Head of caudate nucleus (tissue), 42 donors: ENCODE measurements at regions of chr16 and their contacts with region 1.

Region 1: GRCh38 chr16:58025351-58026138 is at the start of gene MMP15:
- DNase-seq: peak in 40 of 42 donors; percentile 31 to 80 (median 63)

Region 2: DNA sequence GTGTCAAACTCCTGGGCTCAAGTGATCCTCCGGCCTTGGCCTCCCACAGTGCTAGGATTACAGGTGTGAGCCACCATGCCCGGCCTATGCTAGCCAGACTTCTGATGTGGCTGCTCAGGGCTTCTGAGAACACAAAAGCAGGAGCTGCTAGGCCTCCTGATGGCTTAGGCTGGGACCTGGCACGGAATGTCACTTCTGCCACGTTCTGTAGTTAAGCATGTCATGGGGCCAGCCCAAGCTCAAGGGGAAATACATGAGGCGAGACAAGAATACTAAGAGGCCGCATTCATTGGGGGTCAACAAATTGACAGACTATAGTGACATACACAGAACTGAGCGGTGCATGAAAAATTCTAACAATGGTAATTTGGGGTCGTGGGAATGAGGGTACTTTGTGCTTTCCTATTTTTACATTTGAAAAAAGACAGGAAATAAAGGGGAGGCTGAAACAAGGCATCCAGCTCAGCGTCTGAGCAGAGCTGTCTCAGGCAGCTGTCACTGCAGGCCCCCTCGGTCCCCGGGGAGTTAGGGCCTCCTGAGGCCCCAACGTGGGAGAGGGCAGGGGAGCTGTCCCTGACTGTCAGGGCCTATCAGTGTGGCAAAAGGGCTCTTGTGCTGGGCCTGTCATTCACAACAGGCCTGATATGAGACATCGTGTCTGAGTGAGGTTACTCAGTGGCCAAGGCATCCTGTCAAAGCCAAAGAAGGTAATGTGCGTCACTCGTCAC is 77.3 kb after region 1 on chr16:
- intact Hi-C with region 1: no loop called
- DNase-seq: no peak

Region 3: GRCh38 chr16:58124601-58124915 is 99.0 kb after region 1 on chr16:
- intact Hi-C with region 1: loop called (anchors 5 kb)
- DNase-seq: no peak

Region 4: GRCh38 chr16:58198022-58198683 is 172.6 kb after region 1 on chr16 and contains the start of gene CSNK2A2:
- intact Hi-C with region 1: loop called (anchors 10 kb)
- DNase-seq: peak in 41 of 42 donors; percentile 20 to 86 (median 74)